Breast epithelium (tissue), 4 donors: ENCODE measurements at regions of chr1 and their contacts with region 1.

Region 1: GRCh38 chr1:101605878-101606277 is 369.1 kb downstream of the S1PR1 start:
- DNase-seq: no peak
- H3K4me3 ChIP-seq: no peak overlapping the region
- H3K27ac ChIP-seq: no peak overlapping the region
- H3K4me1 ChIP-seq: no peaks in the 10 kb centered on the region
- H3K27me3 ChIP-seq: no peaks in the 10 kb centered on the region
- CTCF ChIP-seq: no peak
- POLR2A ChIP-seq: no peak

Region 2: GRCh38 chr1:101526813-101527212 is 79.1 kb before region 1 on chr1:
- intact Hi-C with region 1: no loop called
- DNase-seq: no peak
- H3K4me3 ChIP-seq: no peak overlapping the region
- H3K27ac ChIP-seq: no peak overlapping the region
- H3K4me1 ChIP-seq: no peaks in the 10 kb centered on the region
- H3K27me3 ChIP-seq: no peaks in the 10 kb centered on the region
- CTCF ChIP-seq: no peak
- POLR2A ChIP-seq: no peak

Region 3: DNA sequence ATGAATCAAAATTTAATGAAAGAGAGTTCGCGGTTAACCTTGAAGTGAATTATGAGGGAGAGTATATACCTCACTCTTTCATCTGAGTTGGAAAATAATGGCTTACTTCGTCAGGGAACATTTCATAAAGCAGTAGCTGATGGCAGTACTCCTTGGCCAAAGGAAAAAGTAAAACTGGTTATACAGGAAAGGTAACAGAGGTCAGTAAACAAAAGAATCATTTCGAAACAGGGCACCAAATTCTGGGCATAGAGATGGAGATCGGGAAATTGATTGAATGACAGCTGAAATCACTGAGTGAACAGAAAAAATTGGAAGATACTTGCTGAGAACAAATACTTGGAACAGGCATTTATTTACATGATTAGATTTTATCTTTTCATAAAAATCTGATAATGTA is 191.9 kb after region 1 on chr1:
- intact Hi-C with region 1: loop called (anchors 5 kb)
- DNase-seq: no peak
- H3K4me3 ChIP-seq: no peak overlapping the region
- H3K27ac ChIP-seq: no peak overlapping the region
- H3K4me1 ChIP-seq: no peaks in the 10 kb centered on the region
- H3K27me3 ChIP-seq: no peaks in the 10 kb centered on the region
- CTCF ChIP-seq: no peak
- POLR2A ChIP-seq: no peak